ENCODE measurements at regions of chr7 and their contacts with region 1.

Region 1: GRCh38 chr7:100889761-100890634 is 483 bp upstream of the UFSP1 start:
- DNase-seq: peak; percentile 65
- H3K4me3 ChIP-seq: peak overlapping the region; percentile 56
- CTCF ChIP-seq: no peak

Region 2: DNA sequence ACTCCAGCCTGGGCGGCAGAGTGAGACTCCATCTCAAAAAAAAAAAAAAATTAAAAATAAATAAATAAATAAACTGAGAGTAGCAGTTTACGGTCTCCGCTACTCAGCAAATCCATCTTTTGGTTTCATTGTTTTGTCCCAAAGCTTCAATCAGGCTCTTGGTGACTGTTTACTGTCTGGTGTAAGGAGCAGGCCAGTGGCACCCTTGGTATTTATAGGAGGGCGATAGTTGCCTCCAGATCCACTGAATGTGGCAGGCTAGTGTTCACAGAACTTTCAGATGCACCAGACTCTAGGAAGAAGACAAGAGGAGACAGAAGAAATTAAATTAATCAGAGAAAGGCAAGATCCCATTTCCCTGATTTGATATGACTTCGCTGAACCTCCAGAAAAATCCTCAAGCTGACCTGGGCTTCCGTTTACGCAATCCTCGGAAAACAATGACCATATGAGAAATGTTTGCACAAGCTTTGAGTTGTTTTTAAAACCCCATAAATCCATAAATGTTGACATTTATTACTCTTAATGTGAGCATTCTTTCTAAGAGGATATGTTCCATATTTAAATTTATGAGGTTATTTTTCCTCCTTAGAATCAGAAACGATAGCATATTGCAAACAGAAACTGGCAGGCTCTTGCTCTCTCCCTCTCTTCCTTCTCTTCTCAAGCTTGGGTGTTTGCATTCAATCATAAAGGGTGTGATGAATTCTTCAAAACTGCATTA is 52.2 kb after region 1 on chr7:
- in situ Hi-C with region 1: loop called (anchors 10 kb)
- DNase-seq: no peak
- H3K4me3 ChIP-seq: no peak overlapping the region
- CTCF ChIP-seq: no peak

Region 3: GRCh38 chr7:100957832-100958421 is 67.9 kb after region 1 on chr7:
- in situ Hi-C with region 1: no loop called
- DNase-seq: no peak
- H3K4me3 ChIP-seq: no peak overlapping the region
- CTCF ChIP-seq: no peak

Region 4: DNA sequence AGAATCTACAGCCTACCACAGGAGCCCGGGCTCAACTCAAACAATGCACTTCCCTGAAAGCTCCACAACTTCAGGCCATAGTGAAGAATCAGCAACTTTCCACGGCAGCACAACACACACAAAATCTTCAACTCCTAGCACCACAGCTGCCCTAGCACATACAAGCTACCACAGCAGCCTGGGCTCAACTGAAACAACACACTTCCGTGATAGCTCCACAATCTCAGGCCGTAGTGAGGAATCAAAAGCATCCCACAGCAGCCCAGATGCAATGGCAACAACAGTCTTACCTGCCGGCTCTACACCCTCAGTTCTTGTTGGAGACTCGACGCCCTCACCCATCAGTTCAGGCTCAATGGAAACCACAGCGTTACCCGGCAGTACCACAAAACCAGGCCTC is 101.6 kb after region 1 on chr7:
- in situ Hi-C with region 1: no loop called
- DNase-seq: no peak
- H3K4me3 ChIP-seq: no peak overlapping the region
- CTCF ChIP-seq: no peak

Region 5: GRCh38 chr7:101058355-101058754 is 168.4 kb after region 1 on chr7:
- in situ Hi-C with region 1: loop called (anchors 10 kb)
- DNase-seq: peak; percentile 15
- H3K4me3 ChIP-seq: no peak overlapping the region
- CTCF ChIP-seq: no peak

Region 6: GRCh38 chr7:101085162-101085987 is 195.4 kb after region 1 on chr7 and contains the start of gene TRIM56:
- in situ Hi-C with region 1: loop called (anchors 10 kb)
- DNase-seq: peak; percentile 36
- H3K4me3 ChIP-seq: peak within 1 kb of the TSS; percentile 55
- CTCF ChIP-seq: no peak

Measured in astrocyte of the cerebellum (primary cell).